ENCODE measurements at regions of chr9 and their contacts with region 1.

Region 1: GRCh38 chr9:122370869-122371755 is at the start of gene PTGS1:
- DNase-seq: peak; percentile 45
- ATAC-seq: peak; percentile 81
- H3K4me3 Mint-ChIP-seq: peak within 1 kb of the TSS; percentile 84
- H3K27ac Mint-ChIP-seq: peak within 1 kb of the TSS; percentile 78
- H3K4me1 Mint-ChIP-seq: peaks cover 36% of the 10 kb centered on the region
- H3K27me3 Mint-ChIP-seq: no peaks in the 10 kb centered on the region
- CTCF ChIP-seq: no peak
- total RNA-seq, gene PTGS1: 8.9 and 9.4 TPM in 2 replicates

Region 2: DNA sequence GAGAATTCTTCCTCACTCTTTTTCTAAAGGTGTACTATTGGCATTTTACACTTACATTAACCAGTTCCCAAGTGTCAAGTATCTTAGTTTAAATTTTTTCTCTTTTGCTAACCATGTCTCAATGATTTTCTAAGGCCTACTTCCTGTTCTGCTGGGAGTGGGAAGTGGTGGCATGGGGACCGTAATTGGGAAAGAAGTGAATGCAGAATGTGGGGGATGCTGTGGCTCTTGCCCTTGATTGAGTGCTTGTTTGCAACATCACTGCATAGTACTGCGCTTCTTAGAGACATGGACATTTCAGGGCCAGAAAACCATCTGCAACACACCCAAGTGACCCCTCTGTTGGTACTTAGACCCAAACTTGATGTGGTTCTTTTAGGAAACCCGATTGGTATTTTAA is 73.6 kb before region 1 on chr9:
- CTCF ChIA-PET with region 1: no interaction called
- POLR2A ChIA-PET with region 1: no interaction called
- intact Hi-C with region 1: no loop called
- DNase-seq: no peak
- ATAC-seq: no peak
- H3K4me3 Mint-ChIP-seq: no peak overlapping the region
- H3K27ac Mint-ChIP-seq: no peak overlapping the region
- H3K4me1 Mint-ChIP-seq: no peaks in the 10 kb centered on the region
- H3K27me3 Mint-ChIP-seq: no peaks in the 10 kb centered on the region
- CTCF ChIP-seq: no peak

Region 3: DNA sequence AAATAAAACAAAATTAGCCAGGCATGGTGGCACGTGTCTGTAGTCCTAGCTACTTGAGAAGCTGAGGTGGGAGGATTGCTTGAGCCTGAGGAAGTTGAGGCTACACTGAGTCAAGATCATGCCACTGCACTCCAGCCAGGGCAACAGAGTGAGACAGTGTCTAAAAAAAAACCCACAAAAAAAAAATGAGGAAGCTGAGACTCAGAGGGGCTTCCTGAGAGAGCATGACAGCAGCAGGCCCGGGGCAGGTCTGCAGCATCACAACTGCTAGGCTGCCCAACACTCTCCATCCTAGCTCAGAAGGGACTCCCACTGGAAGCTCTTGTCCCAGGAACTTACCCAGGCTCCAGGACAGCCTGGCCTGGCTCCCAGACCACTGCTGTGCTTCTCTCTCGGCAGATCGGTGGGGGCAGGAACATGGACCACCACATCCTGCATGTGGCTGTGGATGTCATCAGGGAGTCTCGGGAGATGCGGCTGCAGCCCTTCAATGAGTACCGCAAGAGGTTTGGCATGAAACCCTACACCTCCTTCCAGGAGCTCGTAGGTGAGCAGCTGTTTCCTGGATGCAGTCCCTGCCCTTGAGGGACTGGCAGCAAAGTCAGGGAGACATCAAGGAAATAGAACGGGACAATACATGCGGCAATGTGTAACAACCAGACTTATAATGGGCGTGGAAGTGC is 18.8 kb after region 1 on chr9:
- CTCF ChIA-PET with region 1: no interaction called
- POLR2A ChIA-PET with region 1: interaction called, 16 read pairs
- intact Hi-C with region 1: loop called (anchors 1 kb)
- DNase-seq: peak; percentile 42
- ATAC-seq: peak; percentile 98
- H3K4me3 Mint-ChIP-seq: peak overlapping the region; percentile 32
- H3K27ac Mint-ChIP-seq: peak overlapping the region; percentile 83
- H3K4me1 Mint-ChIP-seq: peaks cover 39% of the 10 kb centered on the region
- H3K27me3 Mint-ChIP-seq: no peaks in the 10 kb centered on the region
- CTCF ChIP-seq: no peak

Measured in activated B cell treated with CpG ODN at 0.5 μM for 24 hours (primary cell).